Activated naive CD4-positive, alpha-beta T cell treated with anti-CD3 and anti-CD28 coated beads for 36 hours (primary cell): ENCODE measurements at regions of chr17 and their contacts with region 1.

Region 1: DNA sequence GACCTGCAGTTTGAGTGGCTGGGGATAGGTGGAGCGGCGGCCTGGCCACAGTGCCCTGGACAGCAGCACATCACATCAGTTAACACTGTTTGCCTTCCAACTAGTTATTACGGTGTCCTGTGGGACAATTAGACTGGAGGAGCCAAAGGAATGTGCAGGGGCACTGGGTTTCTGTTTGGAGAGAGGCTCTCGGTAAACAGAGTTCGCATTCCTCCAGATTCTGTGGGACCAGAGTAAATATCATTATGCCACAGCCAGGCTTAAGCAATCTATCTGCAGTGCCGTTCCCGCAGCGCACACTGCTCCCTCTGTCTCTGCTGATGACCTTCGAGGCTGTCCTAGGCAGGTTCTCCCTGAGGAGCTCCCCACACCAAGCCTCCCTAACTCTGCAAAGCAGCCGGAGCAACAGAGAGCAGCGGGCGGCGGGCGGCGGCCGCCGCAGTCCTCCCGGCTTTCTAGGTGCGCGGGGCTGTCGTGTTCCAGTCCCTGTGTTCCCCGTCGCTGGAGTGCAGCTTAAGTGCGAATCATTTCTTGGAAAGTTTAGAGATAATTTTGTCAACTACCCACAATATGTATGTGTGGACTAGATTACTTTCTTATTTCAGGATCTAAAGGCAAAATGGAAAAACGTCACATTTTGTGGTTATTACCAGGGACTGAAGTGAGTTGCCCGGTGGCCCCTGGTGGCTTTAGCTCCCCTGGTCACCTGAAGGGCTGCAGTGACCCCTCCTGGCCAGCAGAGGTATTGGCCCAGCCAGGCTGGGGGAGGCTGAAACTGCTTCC is 43.2 kb downstream of the PGS1 start:
- DNase-seq: peak; percentile 85
- H3K4me3 Mint-ChIP-seq: no peak overlapping the region
- H3K27ac Mint-ChIP-seq: peak overlapping the region; percentile 70
- H3K4me1 Mint-ChIP-seq: peaks cover 45% of the 10 kb centered on the region
- H3K27me3 Mint-ChIP-seq: no peaks in the 10 kb centered on the region

Region 2: DNA sequence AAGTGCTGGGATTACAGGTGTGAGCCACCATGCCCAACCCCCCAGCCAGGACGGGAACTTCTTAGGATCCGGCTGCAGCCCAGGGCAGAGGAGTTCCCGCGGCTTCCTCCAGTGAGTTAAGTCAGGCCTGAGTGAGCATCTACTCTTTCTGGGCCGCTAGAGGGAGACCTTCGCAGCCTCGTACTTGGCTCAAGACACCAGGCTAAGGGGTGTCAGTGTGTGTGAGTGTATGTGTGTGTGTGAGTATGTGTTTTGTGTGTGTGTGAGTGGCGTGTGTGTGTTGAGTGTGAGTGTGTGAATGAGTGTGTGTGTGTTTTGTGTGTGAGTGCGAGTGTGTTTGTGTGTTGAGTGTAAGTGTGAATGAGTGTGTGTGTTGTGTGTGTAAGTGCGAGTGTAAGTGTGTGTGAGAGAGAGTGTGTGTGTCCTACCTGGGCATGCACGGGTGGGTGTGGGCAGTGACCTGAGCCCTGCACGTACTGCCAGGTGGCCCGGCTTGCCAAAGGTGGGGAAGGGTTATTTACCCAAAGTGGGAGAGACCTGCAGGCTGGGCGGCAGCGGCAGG is 131.8 kb before region 1 on chr17:
- CTCF ChIA-PET with region 1: interaction called, 6 read pairs
- intact Hi-C with region 1: loop called (anchors 1 kb)
- DNase-seq: peak; percentile 89
- H3K4me3 Mint-ChIP-seq: no peak overlapping the region
- H3K27ac Mint-ChIP-seq: no peak overlapping the region
- H3K4me1 Mint-ChIP-seq: peaks cover 2% of the 10 kb centered on the region
- H3K27me3 Mint-ChIP-seq: no peaks in the 10 kb centered on the region

Region 3: GRCh38 chr17:78365561-78366108 is 56.0 kb before region 1 on chr17:
- CTCF ChIA-PET with region 1: interaction called, 35 read pairs
- intact Hi-C with region 1: loop called (anchors 1 kb)
- DNase-seq: no peak
- H3K4me3 Mint-ChIP-seq: no peak overlapping the region
- H3K27ac Mint-ChIP-seq: no peak overlapping the region
- H3K4me1 Mint-ChIP-seq: peaks cover 32% of the 10 kb centered on the region
- H3K27me3 Mint-ChIP-seq: peaks cover 5% of the 10 kb centered on the region

Region 4: DNA sequence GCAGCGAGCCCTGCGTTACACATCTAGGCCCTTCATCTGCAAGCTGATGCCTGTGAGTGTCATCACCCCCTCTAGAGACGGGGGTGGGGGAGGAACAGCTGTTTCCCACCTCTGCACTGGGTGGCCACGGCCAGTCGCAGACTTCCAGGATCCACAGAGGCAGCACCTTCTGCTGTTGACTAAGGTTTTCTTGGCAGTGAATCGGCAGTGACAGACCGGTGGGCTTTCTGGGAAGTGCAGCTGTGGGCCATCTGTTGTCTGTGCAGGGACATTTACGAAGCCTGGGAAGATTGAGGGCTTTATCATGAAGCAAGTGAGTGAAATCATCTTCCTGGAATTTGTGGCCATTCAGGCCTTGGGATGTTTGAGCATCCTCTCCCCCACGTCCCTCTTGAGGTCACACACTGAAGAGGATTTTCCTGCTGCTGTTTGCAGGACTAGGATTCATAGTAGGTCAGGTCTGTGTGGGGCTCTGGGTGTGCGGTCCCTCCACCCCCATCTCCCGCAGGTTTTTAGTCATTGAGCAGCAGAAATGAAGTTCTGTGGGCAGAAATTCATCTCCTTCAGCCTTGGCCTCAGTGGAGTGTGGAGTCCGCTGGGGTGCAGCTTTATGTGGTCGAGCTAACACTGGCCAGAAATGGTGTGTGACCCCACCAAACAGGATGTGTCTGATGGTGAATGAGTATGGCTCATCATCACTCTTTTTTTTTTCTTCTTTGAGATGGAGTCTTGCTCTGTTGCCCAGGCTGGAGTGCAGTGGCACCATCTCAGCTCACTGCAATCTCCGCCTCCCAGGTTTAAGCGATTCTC is 31.2 kb before region 1 on chr17:
- CTCF ChIA-PET with region 1: interaction called, 10 read pairs
- intact Hi-C with region 1: no loop called
- DNase-seq: no peak
- H3K4me3 Mint-ChIP-seq: no peak overlapping the region
- H3K27ac Mint-ChIP-seq: peak overlapping the region; percentile 73
- H3K4me1 Mint-ChIP-seq: peaks cover 72% of the 10 kb centered on the region
- H3K27me3 Mint-ChIP-seq: no peaks in the 10 kb centered on the region